ENCODE measurements at regions of chr5 and their contacts with region 1.

Region 1: DNA sequence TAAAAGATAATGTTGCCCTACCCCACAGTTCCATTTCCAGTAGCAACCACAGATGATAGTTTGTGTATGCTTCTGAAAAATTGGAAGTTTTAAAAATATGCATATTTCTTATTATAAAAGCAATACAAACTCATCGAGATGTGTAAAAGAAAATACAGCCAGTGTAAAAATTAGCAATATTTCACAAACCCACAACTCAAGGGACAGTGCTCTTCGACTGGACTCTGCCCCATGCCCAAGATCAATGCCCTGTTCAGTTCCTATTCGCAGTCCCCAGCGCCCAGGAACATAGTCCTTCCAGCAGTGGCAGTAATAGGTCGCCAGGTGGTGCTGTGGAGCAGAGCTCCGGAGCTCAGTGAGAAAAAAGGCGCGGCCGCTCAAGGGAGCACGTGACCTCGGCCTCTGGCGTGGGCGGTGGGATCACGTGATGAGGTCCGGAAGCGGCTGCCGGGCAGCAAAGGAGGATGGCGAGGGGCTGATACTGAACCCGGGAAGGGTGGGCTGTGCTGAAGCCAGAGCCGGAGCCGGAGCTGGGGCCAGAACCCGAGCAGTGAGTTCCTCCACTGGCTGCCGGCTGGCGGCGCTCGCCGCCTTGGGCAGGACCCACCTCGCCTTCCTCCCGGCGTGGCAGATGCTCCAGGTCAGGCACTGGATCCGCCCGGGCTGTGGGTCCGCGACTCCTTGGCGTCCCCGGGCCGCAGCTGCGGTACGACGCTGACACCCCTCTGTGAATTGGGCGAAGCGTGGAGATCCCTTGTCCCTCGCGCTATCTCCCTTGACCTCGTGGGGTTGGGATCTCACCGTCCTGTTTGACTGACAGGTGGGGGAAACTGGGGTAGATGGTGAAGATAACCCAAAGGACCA is at the start of gene SLC36A1:
- DNase-seq: peak; percentile 91 to 95
- ATAC-seq: peak; percentile 98 to 99 (median 99)
- H3K4me3 ChIP-seq: peak within 1 kb of the TSS; percentile 80
- H3K4me3 Mint-ChIP-seq: peak within 1 kb of the TSS; percentile 97
- H3K27ac ChIP-seq: peak within 1 kb of the TSS; percentile 61
- H3K27ac Mint-ChIP-seq: peak within 1 kb of the TSS; percentile 79 to 92
- H3K4me1 ChIP-seq: peaks cover 13% of the 10 kb centered on the region
- H3K4me1 Mint-ChIP-seq: peaks cover 23 to 37% of the 10 kb centered on the region in 2 donors
- H3K27me3 ChIP-seq: no peaks in the 10 kb centered on the region
- H3K27me3 Mint-ChIP-seq: peaks cover 21 to 31% of the 10 kb centered on the region in 2 donors
- CTCF ChIP-seq: peak; percentile 92
- total RNA-seq, gene SLC36A1: 10.9 to 16.1 (median 13.0) TPM

Region 2: GRCh38 chr5:151480384-151481293 is 33.2 kb after region 1 on chr5:
- intact Hi-C with region 1: no loop called
- DNase-seq: no peak
- ATAC-seq: no peak
- H3K4me3 ChIP-seq: no peak overlapping the region
- H3K4me3 Mint-ChIP-seq: no peak overlapping the region
- H3K27ac ChIP-seq: no peak overlapping the region
- H3K27ac Mint-ChIP-seq: no peak overlapping the region
- H3K4me1 ChIP-seq: peaks cover 5% of the 10 kb centered on the region
- H3K4me1 Mint-ChIP-seq: peaks cover 9 to 10% of the 10 kb centered on the region in 2 donors
- H3K27me3 ChIP-seq: no peaks in the 10 kb centered on the region
- H3K27me3 Mint-ChIP-seq: no peaks in the 10 kb centered on the region
- CTCF ChIP-seq: no peak

Region 3: DNA sequence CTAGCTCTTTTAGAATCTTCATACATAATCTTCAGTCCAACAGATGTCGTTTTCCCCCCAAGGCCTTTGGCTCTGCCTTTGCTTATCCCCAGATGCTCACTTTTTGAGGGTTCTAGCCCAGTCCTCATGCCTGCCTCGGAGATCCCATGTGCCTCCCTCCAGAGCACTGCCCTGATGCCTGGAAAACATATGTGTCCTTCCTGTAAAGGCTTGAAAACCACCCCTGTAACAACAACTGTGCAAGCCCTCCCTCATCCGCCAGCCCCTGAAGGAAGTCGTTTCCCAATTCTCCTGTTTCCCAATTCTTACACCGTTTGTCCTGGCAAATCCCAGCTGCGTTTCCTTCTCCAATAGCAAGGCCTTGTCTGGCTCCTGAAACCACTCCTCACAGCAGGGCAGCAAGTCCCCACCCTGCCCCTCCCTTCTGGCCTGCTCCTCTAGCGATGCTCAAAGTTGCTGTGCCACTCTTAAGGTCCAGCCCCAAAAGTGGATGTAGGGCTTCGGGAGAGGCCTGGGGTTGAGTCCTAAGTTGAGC is 52.2 kb after region 1 on chr5:
- intact Hi-C with region 1: loop called (anchors 1 kb)
- DNase-seq: no peak
- ATAC-seq: no peak
- H3K4me3 ChIP-seq: no peak overlapping the region
- H3K4me3 Mint-ChIP-seq: no peak overlapping the region
- H3K27ac ChIP-seq: no peak overlapping the region
- H3K27ac Mint-ChIP-seq: no peak overlapping the region
- H3K4me1 ChIP-seq: peaks cover 6% of the 10 kb centered on the region
- H3K4me1 Mint-ChIP-seq: peaks cover 5 to 7% of the 10 kb centered on the region in 2 donors
- H3K27me3 ChIP-seq: no peaks in the 10 kb centered on the region
- H3K27me3 Mint-ChIP-seq: no peaks in the 10 kb centered on the region
- CTCF ChIP-seq: no peak

Region 4: DNA sequence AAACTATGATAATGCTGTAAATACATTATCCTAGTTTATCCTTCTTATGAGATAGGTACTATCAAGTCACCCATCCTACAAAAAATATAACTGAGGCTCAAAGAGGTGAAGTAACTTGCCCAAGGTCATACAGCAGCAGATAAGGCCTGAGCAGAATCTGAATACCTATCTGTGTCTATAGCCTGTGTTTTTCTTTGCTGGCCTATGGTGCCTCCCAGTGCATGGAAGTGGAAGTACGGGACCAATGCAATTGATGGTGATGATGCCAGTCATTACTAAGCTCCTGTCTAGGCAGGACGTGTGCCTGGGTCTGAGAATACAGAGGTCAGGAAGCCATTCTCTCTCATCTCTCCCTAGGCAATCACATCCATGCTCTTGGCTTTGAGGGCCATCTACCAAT is 75.9 kb after region 1 on chr5:
- intact Hi-C with region 1: loop called (anchors 1 kb)
- DNase-seq: peak in 1 of 2 donors; percentile 59
- ATAC-seq: peak in 2 of 3 donors; percentile 53 to 70
- H3K4me3 ChIP-seq: no peak overlapping the region
- H3K4me3 Mint-ChIP-seq: no peak overlapping the region
- H3K27ac ChIP-seq: no peak overlapping the region
- H3K27ac Mint-ChIP-seq: no peak overlapping the region
- H3K4me1 ChIP-seq: no peaks in the 10 kb centered on the region
- H3K4me1 Mint-ChIP-seq: no peaks in the 10 kb centered on the region
- H3K27me3 ChIP-seq: no peaks in the 10 kb centered on the region
- H3K27me3 Mint-ChIP-seq: no peaks in the 10 kb centered on the region
- CTCF ChIP-seq: peak; percentile 13

Region 5: DNA sequence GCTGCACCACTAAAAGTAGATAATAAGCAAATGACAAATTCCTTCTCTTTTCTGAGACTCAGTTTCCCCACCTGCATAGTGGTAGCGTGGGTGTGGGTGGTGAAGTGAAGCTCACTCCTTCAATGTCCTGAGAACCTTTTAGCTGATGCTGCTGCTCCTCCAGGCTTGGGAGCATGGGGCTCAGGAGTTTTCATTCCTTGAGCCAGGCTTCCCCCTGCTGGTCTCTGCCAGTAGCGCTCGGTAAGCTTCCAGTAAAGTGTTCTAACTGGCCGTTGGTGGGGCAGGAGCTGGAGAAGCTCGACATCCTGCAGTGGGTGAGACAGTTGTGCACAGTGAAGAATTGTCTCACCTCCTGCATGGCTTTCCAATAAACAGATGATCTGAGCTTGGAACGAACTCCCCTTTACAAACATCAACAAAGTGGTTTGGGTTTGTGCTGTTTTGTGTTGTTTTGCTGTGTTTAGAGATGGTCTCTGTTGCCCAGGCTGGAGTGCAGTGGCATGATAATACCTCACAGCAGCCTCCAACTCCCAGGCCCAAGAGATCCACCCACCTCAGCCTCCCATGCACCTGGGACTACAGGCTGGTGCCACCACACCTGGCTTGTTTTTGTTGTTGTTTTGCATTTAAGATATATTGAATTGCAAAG is 204.7 kb after region 1 on chr5:
- intact Hi-C with region 1: loop called (anchors 5 kb)
- DNase-seq: peak; percentile 45 to 84
- ATAC-seq: peak; percentile 79 to 96 (median 84)
- H3K4me3 ChIP-seq: no peak overlapping the region
- H3K4me3 Mint-ChIP-seq: no peak overlapping the region
- H3K27ac ChIP-seq: no peak overlapping the region
- H3K27ac Mint-ChIP-seq: no peak overlapping the region
- H3K4me1 ChIP-seq: no peaks in the 10 kb centered on the region
- H3K4me1 Mint-ChIP-seq: no peaks in the 10 kb centered on the region
- H3K27me3 ChIP-seq: no peaks in the 10 kb centered on the region
- H3K27me3 Mint-ChIP-seq: peaks cover 0 to 5% of the 10 kb centered on the region in 2 donors
- CTCF ChIP-seq: peak; percentile 60

Region 6: GRCh38 chr5:151740336-151740942 is 293.0 kb after region 1 on chr5:
- intact Hi-C with region 1: loop called (anchors 10 kb)
- DNase-seq: peak; percentile 35 to 81
- ATAC-seq: peak; percentile 41 to 62 (median 48)
- H3K4me3 ChIP-seq: no peak overlapping the region
- H3K4me3 Mint-ChIP-seq: no peak overlapping the region
- H3K27ac ChIP-seq: no peak overlapping the region
- H3K27ac Mint-ChIP-seq: peak overlapping the region in 1 of 2 donors; percentile 9
- H3K4me1 ChIP-seq: peaks cover 19% of the 10 kb centered on the region
- H3K4me1 Mint-ChIP-seq: peaks cover 48 to 50% of the 10 kb centered on the region in 2 donors
- H3K27me3 ChIP-seq: no peaks in the 10 kb centered on the region
- H3K27me3 Mint-ChIP-seq: no peaks in the 10 kb centered on the region
- CTCF ChIP-seq: peak; percentile 88

Region 7: DNA sequence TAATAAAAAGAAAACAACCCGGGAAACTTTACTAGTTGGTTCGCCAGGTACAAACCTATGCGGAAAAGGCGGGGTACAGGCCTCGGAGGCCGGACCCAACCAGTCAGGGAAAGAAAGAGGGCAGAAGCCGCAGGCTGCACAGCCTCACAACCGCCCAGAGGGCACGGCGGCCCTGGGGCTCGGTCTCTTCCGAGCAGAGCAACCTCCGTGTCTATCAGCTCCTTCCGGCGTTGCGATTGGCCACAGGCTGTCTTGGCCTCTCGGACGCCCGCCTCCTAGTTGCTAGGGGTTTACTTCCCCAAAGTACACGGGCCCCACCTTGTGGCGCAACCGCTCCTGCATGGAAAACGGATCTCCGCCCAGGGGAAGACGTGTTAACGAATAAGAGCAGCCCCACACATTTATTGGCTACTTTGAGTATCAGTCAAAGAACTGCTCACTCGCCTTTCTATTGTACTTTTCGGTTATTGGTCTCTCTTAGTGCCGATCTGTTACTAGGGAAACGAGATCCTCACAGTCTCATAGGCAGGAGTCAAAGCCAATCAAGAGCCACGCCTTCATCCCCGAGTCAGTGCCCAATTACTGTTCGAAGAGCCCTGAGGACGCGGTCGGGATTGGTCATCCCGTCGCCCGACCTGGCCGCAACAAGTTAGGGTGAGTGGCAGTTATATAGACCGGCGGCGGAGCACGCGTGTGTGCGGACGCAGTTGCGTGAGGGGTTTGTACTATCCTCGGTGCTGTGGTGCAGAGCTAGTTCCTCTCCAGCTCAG is 324.0 kb after region 1 on chr5 and contains the start of gene G3BP1:
- intact Hi-C with region 1: loop called (anchors 1 kb)
- DNase-seq: peak; percentile 97 to 100
- ATAC-seq: peak; percentile 76 to 89 (median 77)
- H3K4me3 ChIP-seq: peak within 1 kb of the TSS; percentile 82
- H3K4me3 Mint-ChIP-seq: peak within 1 kb of the TSS; percentile 82
- H3K27ac ChIP-seq: peak within 1 kb of the TSS; percentile 94
- H3K27ac Mint-ChIP-seq: no peak within 1 kb of the TSS
- H3K4me1 ChIP-seq: peaks cover 27% of the 10 kb centered on the region
- H3K4me1 Mint-ChIP-seq: peaks cover 40 to 43% of the 10 kb centered on the region in 2 donors
- H3K27me3 ChIP-seq: no peaks in the 10 kb centered on the region
- H3K27me3 Mint-ChIP-seq: no peaks in the 10 kb centered on the region
- CTCF ChIP-seq: peak; percentile 52
- total RNA-seq, gene G3BP1: 94.9 to 127 (median 121) TPM

Region 8: DNA sequence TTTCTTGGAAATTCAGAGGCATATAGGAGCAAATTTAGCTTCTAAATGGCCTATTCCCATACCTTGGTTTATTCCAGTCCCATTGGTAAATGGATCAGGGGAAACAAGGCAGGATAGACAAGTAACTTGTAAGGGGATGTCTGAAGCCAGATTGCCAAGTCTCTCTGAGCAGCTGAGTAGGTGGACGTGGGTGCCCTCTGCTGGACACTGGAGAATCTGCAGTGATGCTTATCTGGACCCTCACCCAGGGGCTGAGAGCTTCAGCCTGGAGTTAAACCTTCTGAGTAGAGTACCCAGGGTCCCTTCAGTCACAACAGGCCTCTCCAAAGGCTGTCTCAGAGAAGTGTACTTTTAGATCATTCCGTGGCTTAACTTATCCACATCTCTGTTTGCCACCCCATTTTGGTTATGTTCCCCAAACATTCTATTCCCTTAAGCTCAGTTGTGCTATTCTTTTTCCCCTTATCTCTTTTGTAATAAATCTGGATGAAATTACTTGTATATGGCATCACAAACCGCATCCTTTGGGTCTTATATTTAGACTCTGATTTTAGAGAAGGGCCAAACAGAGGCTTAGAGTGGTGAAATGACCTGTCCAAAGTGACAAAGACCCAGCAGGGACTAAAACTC is 695.5 kb after region 1 on chr5:
- intact Hi-C with region 1: loop called (anchors 10 kb)
- DNase-seq: peak; percentile 51 to 82
- ATAC-seq: peak; percentile 76 to 86 (median 83)
- H3K4me3 ChIP-seq: no peak overlapping the region
- H3K4me3 Mint-ChIP-seq: no peak overlapping the region
- H3K27ac ChIP-seq: no peak overlapping the region
- H3K27ac Mint-ChIP-seq: no peak overlapping the region
- H3K4me1 ChIP-seq: no peaks in the 10 kb centered on the region
- H3K4me1 Mint-ChIP-seq: no peaks in the 10 kb centered on the region
- H3K27me3 ChIP-seq: no peaks in the 10 kb centered on the region
- H3K27me3 Mint-ChIP-seq: peaks cover 3 to 6% of the 10 kb centered on the region in 2 donors
- CTCF ChIP-seq: peak; percentile 91